Activated T-helper 1 cell treated with anti-CD3 and anti-CD28 coated beads, Interleukin-12 subunit alpha, Interleukin-12 subunit beta, Interleukin-2, Interleukin-4 antibody, amounts not matched to agents 30 ng/mL and 10 ng/mL and 1 ng/mL, durations not matched to agents 14 hours and 24 hours and 36 hours (primary cell): ENCODE measurements at regions of chr1 and their contacts with region 1.

Region 1: DNA sequence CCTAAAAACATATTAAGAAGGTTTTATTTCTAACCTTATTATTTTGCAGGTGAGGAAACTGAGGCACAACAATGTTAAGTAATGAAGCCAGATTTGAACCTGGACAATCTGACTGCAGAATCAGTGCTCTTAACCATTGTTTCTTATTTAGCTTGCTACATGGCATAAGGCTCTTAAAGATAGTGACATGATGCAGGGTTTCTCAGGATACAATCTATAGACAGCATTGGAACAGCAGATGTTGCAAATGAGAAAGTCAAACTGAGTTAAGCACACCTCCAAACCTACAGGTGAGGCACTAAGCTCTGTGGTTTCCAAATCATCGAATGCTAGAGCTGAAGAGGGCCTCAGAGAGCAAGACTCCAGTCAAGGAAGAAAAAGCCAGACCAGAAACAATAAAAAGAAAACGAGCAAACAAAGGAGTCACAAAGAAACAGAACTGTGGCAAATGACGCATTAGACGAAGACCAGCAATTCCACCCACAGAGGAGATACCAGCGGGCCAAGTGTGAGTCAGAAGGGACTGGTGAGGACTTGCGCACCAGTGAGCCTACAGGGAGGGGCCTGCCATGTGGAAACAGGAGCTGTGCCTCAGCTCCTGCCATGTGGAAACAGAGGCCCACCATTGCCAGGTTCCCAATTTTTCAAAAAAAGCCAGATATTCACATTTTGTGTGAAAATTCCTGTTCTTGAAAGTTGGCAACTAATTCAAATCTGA is 14.4 kb downstream of the CD58 start:
- DNase-seq: peak; percentile 67
- H3K4me3 Mint-ChIP-seq: peak overlapping the region; percentile 9
- H3K27ac Mint-ChIP-seq: peak overlapping the region; percentile 77
- H3K4me1 Mint-ChIP-seq: peaks cover 86% of the 10 kb centered on the region
- H3K27me3 Mint-ChIP-seq: no peaks in the 10 kb centered on the region

Region 2: DNA sequence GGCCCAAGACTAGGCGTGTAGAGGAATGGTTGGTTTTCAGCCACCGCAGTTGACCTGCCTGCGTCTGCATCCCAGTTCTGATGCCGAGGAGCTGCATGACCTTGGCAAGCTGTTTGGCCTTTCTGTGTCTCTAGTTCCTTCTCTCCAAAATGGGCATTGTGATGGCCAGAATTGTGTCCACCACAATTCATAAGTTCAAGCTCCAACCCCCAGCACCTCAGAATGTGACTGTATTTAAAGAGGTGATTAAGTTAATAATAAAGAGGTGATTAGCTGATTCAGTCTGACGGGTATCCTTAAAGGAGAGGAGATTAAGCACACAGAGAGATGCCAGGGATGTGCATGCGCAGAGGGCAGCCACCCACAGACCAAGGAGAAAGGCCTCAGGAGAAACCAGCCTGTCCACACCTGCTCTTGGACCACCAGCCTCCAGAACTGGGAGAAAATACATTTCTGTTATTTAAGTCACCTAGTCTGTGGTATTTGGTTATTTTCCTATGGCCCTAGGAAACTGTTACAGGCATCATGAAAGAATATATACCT is 416.8 kb before region 1 on chr1:
- intact Hi-C with region 1: loop called (anchors 5 kb)
- DNase-seq: no peak
- H3K4me3 Mint-ChIP-seq: no peak overlapping the region
- H3K27ac Mint-ChIP-seq: no peak overlapping the region
- H3K4me1 Mint-ChIP-seq: peaks cover 12% of the 10 kb centered on the region
- H3K27me3 Mint-ChIP-seq: peaks cover 6% of the 10 kb centered on the region

Region 3: GRCh38 chr1:116504308-116505156 is 51.9 kb before region 1 on chr1:
- intact Hi-C with region 1: loop called (anchors 1 kb)
- DNase-seq: peak; percentile 86
- H3K4me3 Mint-ChIP-seq: peak overlapping the region; percentile 3
- H3K27ac Mint-ChIP-seq: peak overlapping the region; percentile 88
- H3K4me1 Mint-ChIP-seq: peaks cover 91% of the 10 kb centered on the region
- H3K27me3 Mint-ChIP-seq: no peaks in the 10 kb centered on the region

Region 4: DNA sequence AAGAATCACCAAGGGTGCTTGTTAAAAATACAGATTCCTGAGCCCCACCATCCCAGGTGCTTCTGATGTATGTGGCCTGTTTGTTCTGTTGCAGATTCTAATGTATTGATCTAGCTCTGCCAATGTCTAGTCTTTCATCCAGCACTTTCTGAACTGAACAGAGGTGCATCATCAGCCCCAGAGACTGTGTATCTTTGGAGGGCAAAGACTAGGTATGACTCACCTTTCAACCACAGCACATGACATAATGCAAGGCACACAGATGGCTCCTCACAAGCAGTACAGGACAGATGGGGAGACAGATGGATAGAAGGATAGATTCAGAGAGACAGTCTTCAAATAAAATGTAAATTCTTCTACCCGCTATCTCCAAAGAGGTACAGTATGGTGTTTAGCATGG is 17.9 kb before region 1 on chr1:
- intact Hi-C with region 1: loop called (anchors 1 kb)
- DNase-seq: peak; percentile 51
- H3K4me3 Mint-ChIP-seq: peak overlapping the region; percentile 28
- H3K27ac Mint-ChIP-seq: peak overlapping the region; percentile 79
- H3K4me1 Mint-ChIP-seq: peaks cover 68% of the 10 kb centered on the region
- H3K27me3 Mint-ChIP-seq: no peaks in the 10 kb centered on the region

Region 5: DNA sequence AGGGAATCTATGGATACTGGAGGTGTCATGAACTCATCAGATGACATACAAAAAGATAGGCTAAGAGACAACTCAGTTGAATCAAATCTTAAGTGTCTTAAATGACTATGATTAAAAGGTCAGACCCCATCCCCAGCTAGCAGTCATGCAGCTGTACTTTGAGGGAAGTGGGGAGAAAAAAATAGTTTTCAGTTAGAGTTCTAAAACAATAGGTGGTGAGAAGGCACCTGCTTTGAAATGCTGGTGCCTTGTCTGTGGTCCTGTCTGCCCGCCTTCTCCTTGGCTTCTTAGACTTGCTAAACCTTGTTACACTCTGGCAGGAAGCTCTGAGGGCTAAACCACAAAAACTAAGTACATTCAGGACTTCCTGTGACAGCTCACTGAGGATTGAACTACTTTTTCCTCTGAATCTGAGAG is 213.1 kb after region 1 on chr1:
- intact Hi-C with region 1: loop called (anchors 2 kb)
- DNase-seq: peak; percentile 77
- H3K4me3 Mint-ChIP-seq: peak overlapping the region; percentile 84
- H3K27ac Mint-ChIP-seq: peak overlapping the region; percentile 100
- H3K4me1 Mint-ChIP-seq: peaks cover 90% of the 10 kb centered on the region
- H3K27me3 Mint-ChIP-seq: peaks cover under 1% of the 10 kb centered on the region